ENCODE measurements at regions of chr3 and their contacts with region 1.

Region 1: DNA sequence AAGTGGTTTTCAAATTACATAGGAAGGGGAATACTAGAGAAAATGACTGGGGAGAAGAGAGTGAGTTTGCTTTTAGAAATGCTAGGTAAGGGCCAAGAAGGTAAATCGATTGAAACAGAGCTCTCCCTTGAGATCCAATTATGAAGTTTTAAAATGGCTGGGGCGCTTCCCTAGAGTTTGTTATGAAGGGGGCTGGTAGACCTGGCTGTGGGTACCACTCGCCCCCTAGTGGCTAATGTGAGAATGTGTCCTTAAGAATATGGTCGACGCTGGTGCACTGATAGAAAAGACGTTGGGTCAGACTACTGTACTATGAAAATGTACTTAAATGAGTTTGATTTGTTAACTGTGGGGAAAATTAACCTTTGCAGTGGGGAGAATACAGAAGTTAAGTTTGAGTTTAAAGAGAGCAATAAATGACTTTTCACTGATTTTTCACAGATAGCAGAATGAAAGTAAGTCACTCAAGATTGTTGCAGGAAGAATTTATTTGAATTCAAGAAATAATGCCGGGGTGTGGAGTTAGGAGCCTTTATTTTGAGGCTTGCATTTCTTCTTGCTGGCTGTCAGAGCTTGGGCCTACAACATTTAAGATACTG is 9.2 kb downstream of the TMPRSS7 start:
- DNase-seq: peak; percentile 83
- H3K4me3 Mint-ChIP-seq: no peak overlapping the region
- H3K27ac Mint-ChIP-seq: no peak overlapping the region
- H3K4me1 Mint-ChIP-seq: peaks cover 10% of the 10 kb centered on the region
- H3K27me3 Mint-ChIP-seq: no peaks in the 10 kb centered on the region
- CTCF ChIP-seq: peak; percentile 79

Region 2: GRCh38 chr3:111989061-111989678 is 54.5 kb before region 1 on chr3:
- CTCF ChIA-PET with region 1: interaction called, 165 read pairs
- POLR2A ChIA-PET with region 1: interaction called, 7 read pairs
- intact Hi-C with region 1: loop called (anchors 1 kb)
- DNase-seq: peak; percentile 74
- H3K4me3 Mint-ChIP-seq: no peak overlapping the region
- H3K27ac Mint-ChIP-seq: no peak overlapping the region
- H3K4me1 Mint-ChIP-seq: peaks cover 24% of the 10 kb centered on the region
- H3K27me3 Mint-ChIP-seq: no peaks in the 10 kb centered on the region
- CTCF ChIP-seq: peak; percentile 47

Region 3: DNA sequence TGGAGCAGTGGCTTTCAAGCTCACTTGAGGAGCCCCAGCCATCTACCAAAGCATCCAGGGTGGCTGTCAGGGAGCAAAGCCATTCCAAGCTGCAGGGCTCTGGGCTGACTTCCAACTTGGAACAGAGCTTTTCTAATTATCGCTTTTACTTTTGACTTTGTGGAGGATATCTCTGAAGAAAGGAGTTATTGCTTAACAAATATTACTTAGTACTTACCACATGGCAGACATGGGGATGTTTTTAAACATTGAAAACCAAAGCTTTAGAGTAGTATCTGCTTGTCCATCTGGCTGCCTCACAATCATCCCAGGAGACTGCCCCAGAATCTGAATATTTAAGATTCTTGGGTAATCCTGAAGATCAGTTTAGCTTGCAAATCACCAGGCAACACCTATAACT is 36.1 kb before region 1 on chr3:
- CTCF ChIA-PET with region 1: interaction called, 11 read pairs
- POLR2A ChIA-PET with region 1: no interaction called
- intact Hi-C with region 1: no loop called
- DNase-seq: no peak
- H3K4me3 Mint-ChIP-seq: no peak overlapping the region
- H3K27ac Mint-ChIP-seq: no peak overlapping the region
- H3K4me1 Mint-ChIP-seq: peaks cover 3% of the 10 kb centered on the region
- H3K27me3 Mint-ChIP-seq: no peaks in the 10 kb centered on the region
- CTCF ChIP-seq: no peak

Region 4: DNA sequence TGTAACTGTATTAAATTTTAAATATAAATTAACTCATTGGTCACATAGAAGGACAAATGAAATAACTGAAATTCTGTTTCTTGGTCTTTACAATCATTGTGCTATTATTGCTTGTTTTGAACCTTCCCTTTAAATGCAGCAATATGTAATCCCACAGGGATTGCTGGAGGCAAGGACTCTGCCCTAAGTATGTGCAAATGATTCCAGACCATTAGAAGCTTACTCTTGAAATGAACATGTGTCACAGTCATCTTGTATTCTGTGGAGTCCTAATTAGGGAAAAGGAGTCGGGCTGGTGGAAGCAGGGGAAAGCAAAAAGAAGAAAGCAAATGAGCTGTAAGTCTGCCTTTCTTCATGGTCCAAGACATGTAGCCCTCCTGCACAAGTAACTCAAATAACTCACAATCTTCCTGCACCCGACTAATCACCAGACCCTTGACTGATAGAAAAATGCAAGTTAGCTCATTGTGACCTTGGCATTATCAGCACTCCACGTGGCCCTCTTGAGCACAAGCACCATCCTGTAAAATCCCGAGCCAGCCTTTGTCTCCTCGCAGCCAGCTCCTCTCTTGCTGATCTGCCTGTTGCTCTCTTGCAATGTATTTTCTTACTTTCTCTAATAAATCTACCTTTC is 11.5 kb before region 1 on chr3:
- CTCF ChIA-PET with region 1: interaction called, 34 read pairs
- POLR2A ChIA-PET with region 1: no interaction called
- intact Hi-C with region 1: no loop called
- DNase-seq: no peak
- H3K4me3 Mint-ChIP-seq: no peak overlapping the region
- H3K27ac Mint-ChIP-seq: no peak overlapping the region
- H3K4me1 Mint-ChIP-seq: no peaks in the 10 kb centered on the region
- H3K27me3 Mint-ChIP-seq: no peaks in the 10 kb centered on the region
- CTCF ChIP-seq: no peak

Region 5: GRCh38 chr3:112111785-112112402 is 68.2 kb after region 1 on chr3:
- CTCF ChIA-PET with region 1: interaction called, 12 read pairs
- POLR2A ChIA-PET with region 1: no interaction called
- intact Hi-C with region 1: no loop called
- DNase-seq: peak; percentile 82
- H3K4me3 Mint-ChIP-seq: no peak overlapping the region
- H3K27ac Mint-ChIP-seq: no peak overlapping the region
- H3K4me1 Mint-ChIP-seq: peaks cover 16% of the 10 kb centered on the region
- H3K27me3 Mint-ChIP-seq: no peaks in the 10 kb centered on the region
- CTCF ChIP-seq: peak; percentile 80